ENCODE measurements at regions of chr1 and their contacts with region 1.

Region 1: GRCh38 chr1:28792644-28793121 is 19.3 kb upstream of the OPRD1 start:
- DNase-seq: no peak
- H3K4me3 ChIP-seq: no peak overlapping the region
- H3K27ac ChIP-seq: no peak overlapping the region
- H3K4me1 ChIP-seq: no peaks in the 10 kb centered on the region
- H3K27me3 ChIP-seq: no peaks in the 10 kb centered on the region
- CTCF ChIP-seq: peak in 1 of 5 experiments; percentile 9
- EP300 ChIP-seq: no peak
- POLR2A ChIP-seq: no peak

Region 2: DNA sequence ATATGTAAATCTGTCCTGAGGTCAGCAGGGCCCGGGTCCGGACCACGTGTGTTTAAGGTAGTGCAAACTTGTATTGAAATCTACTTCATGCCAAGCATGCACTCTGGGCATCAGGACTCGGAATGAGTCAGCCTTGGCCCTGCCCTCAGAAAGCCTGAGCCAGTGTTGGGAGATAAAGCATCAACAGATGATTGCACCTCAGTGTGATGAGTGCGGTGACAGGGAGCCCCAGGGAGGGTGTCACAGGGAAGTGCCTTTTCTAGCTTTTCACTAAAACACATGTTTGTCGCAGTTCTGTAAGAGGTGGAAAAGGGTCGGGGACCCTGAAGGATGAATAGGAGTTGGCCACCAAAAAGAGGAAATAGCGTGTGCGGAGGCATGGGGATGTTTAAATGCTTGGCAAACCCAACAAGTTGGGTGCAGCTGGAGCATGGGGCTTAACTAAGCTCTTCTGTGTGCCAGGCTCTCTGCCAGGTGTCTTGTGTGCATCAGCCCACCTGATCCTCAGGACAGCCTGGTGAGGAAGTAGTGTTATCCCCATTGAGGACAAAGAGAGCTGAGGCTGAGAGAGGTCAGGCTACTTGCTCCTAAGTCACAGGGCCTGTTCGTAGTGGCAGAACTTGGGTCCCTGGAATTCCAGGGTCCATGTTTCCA is 73.4 kb after region 1 on chr1:
- in situ Hi-C with region 1: loop called in 1 of 4 experiments (anchors 5 kb)
- intact Hi-C with region 1: loop called (anchors 5 kb)
- DNase-seq: no peak
- H3K4me3 ChIP-seq: no peak overlapping the region
- H3K27ac ChIP-seq: no peak overlapping the region
- H3K4me1 ChIP-seq: peaks cover 0 to 3% (median 0%) of the 10 kb centered on the region in 4 donors
- H3K27me3 ChIP-seq: no peaks in the 10 kb centered on the region
- CTCF ChIP-seq: no peak
- EP300 ChIP-seq: no peak
- POLR2A ChIP-seq: no peak

Region 3: DNA sequence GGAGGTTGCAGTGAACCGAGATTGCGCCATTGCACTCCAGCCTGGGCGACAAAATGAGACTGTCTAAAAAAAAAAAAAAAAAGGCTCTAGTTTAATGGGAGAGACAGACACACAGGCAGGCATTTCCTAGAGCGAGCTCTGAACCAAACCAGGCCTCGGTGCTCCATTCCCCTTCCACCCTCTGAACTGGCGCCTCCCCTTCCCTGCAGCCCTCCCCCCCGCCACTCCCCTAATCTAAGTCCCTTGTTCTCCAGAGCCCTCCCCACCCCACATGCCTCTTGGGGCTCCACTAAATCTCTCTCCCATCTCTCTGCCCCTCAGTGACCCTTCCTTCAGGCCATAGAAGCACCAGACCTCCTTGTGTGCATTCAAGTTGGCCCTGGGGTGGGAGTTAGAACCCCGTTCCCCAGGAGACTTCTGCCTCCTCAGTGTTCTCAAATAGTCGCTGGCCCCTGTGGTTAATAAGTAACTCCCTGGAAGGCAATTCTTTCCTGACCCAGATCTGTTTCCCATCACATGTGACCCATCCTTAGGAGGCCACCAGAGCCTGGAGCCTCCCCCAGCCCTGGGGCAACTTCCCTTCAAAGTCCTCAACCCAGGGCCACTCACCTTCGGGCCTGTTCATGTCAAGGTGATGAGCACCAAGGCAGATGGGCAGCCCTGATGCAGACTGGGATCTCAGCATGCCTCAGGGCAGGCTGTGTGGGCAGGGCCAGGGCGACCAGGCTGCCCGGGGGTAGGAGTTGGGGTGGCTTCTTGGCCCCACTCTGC is 79.1 kb after region 1 on chr1:
- in situ Hi-C with region 1: loop called in 3 of 4 experiments (anchors 5 kb)
- intact Hi-C with region 1: loop called (anchors 5 kb)
- DNase-seq: no peak
- H3K4me3 ChIP-seq: no peak overlapping the region
- H3K27ac ChIP-seq: no peak overlapping the region
- H3K4me1 ChIP-seq: no peaks in the 10 kb centered on the region
- H3K27me3 ChIP-seq: no peaks in the 10 kb centered on the region
- CTCF ChIP-seq: no peak
- EP300 ChIP-seq: no peak
- POLR2A ChIP-seq: no peak

Region 4: GRCh38 chr1:28877132-28877781 is 84.6 kb after region 1 on chr1:
- in situ Hi-C with region 1: loop called in 2 of 4 experiments (anchors 5 kb)
- intact Hi-C with region 1: loop called (anchors 5 kb)
- DNase-seq: peak; percentile 84
- H3K4me3 ChIP-seq: no peak overlapping the region
- H3K27ac ChIP-seq: no peak overlapping the region
- H3K4me1 ChIP-seq: peaks cover 0 to 6% (median 1%) of the 10 kb centered on the region in 4 donors
- H3K27me3 ChIP-seq: no peaks in the 10 kb centered on the region
- CTCF ChIP-seq: peak; percentile 84 to 94 (median 94)
- EP300 ChIP-seq: no peak
- POLR2A ChIP-seq: no peak

Region 5: DNA sequence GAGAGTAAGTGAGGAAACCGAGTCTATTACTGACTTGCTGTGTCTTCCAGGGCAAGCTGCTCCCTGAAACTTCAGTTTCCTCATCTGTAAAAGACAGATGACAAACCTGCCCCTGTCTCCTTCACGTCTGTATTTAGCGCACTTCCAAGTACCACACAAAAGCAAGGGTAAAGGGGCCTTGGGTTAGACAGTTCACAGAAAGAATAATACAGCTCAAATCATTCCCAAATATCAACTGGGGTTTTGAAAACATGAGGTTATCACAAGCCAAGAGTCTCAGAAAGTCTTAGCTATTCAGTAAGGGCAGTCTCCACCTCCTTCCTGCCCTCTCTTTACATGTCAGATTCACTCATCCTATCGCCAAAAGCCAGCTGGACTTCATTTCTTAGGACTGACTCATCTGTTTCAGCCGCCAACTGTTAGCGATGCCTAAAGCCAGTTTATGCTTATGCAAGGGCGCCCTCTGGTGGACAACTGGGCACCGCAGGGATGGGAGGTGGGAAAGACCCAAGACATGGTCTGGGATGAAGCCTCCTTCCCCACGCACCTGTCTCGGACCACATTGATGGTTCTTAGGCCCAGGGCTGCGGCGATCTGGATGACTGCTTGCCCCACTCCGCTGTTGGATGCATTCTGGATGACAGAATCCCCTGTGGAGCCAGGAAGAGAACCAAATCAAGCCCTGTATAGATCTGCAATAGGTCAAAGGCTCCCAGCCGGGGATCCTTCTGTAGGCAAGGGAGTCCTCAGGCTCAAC is 410.1 kb after region 1 on chr1:
- in situ Hi-C with region 1: loop called in 3 of 4 experiments (anchors 10 to 25 kb)
- intact Hi-C with region 1: no loop called
- DNase-seq: peak; percentile 96
- H3K4me3 ChIP-seq: no peak overlapping the region
- H3K27ac ChIP-seq: peak overlapping the region; percentile 69 to 81 (median 76)
- H3K4me1 ChIP-seq: peaks cover 5 to 14% (median 8%) of the 10 kb centered on the region in 4 donors
- H3K27me3 ChIP-seq: no peaks in the 10 kb centered on the region
- CTCF ChIP-seq: peak; percentile 92 to 97 (median 96)
- EP300 ChIP-seq: no peak
- POLR2A ChIP-seq: no peak

Measured in transverse colon (tissue), 4 donors.